ENCODE measurements at regions of chr17 and their contacts with region 1.

Region 1: GRCh38 chr17:18033442-18034099 is 5.4 kb downstream of the ATPAF2 start:
- DNase-seq: no peak
- ATAC-seq: peak; percentile 91
- H3K4me3 ChIP-seq: no peak overlapping the region
- H3K27ac ChIP-seq: no peak overlapping the region
- H3K4me1 ChIP-seq: no peaks in the 10 kb centered on the region
- H3K27me3 ChIP-seq: no peaks in the 10 kb centered on the region

Region 2: DNA sequence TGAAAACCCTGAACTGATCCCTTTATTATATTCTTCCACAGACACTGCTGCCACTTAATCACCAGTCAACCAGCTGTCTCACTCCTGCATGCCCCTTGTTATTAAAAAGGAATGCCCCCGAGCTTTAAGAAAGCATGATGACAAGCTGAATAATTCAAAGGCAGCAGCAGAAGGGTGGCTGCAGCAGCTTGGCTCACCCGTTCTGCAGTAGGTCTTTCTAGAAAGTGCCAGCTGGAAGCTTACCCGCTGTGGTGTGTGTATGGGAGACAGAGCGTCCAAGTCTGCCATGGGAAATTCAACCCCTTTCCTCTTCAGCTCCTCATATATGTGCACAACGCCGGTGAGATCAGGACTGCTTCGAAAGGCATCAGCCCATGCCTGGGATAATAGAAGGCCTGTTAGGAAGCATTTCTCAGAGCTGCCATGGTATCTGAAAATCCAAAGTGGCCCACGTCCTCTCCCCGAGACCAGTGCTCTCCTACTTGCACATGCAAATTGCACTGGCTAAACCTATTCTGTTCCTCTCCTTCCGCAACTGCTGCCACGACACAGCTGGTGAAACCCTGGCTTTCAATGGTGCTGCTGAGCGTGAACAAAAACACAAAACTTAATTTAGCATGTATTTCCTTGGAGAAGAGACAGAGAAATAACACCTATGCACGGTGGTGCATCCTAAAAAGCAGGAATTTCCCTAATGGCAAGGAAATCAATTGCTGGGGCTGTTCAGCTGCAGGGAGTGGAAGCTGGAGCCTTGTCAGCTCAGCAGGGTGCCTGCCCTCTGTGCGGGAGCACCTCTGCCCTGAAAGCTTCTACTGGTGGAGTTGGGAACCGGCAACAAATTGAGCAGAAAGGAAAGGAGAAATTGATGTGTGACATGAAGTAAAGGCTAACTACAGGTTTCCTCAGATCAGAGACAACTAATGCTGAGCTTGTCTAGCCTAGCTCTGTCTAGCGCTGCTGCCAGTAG is 148.9 kb before region 1 on chr17:
- intact Hi-C with region 1: loop called in 1 of 2 experiments (anchors 2 kb)
- DNase-seq: peak in 1 of 2 donors; percentile 17
- ATAC-seq: no peak
- H3K4me3 ChIP-seq: no peak overlapping the region
- H3K27ac ChIP-seq: no peak overlapping the region
- H3K4me1 ChIP-seq: no peaks in the 10 kb centered on the region
- H3K27me3 ChIP-seq: no peaks in the 10 kb centered on the region